ENCODE measurements at regions of chr13 and their contacts with region 1.

Region 1: DNA sequence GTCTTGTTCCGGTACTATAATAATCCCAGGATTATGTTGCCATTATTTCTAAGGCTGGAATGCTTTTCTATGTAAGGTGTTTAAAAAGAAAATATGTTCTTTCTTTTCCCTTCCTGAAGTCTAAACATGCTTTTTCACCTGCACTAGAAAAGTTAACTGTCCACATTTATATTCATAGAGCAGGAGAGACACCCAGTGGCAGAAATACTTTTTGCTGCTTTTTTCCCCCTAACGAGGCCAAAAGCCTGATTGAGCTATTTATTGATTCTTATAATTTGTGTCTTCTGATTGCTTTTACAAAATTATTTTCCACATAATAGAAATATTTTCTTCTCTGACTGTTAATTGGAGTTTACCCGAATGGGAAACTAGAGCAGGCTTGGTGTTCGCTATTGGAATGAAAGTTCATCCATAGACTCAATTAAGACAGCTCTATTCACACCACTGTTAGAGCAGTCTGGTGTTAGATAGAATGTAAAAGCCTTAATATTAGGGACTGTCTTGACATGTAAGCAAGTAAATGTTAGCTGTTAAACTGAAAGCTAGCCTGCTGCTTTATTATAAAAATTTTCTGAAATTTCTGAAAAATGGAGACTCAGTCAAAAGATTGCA is 15.8 kb downstream of the GPR180 start:
- DNase-seq: peak in 2 of 4 donors; percentile 29 to 35
- ATAC-seq: peak; percentile 70
- H3K4me3 ChIP-seq: no peak overlapping the region
- H3K27ac ChIP-seq: no peak overlapping the region
- H3K4me1 ChIP-seq: no peaks in the 10 kb centered on the region
- H3K27me3 ChIP-seq: no peaks in the 10 kb centered on the region
- CTCF ChIP-seq: peak; percentile 48 to 52

Region 2: DNA sequence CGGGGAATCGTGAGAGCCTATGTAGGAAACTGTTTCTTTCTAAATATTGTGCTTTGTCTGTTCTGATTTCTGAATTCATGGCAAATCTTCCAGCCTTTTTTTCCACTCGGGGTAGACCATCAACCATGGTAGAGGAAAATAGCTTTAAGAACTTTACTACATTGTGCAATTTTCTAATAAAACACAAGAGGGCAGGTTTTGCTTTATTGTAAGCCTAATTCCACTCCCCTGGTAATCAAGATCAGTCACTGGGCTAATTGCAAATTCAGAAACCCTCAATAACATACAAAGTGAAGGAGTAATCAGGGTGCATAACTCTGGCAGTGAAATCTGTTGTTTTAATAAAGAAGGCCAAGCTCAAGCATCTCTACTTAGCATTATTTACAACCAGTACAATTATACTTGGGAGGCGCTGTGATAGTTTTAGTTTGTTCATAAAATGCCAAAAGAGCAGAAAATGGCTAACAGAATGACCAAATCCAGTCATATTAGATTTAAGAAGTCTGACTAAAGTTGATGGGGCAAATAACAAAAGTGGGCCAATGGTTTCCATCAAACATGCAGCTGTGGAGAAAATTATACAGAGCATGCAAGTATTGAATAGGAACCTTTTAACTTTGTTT is 181.8 kb before region 1 on chr13:
- intact Hi-C with region 1: loop called in 1 of 2 experiments (anchors 5 kb)
- DNase-seq: peak in 2 of 4 donors; percentile 45 to 58
- ATAC-seq: peak; percentile 84
- H3K4me3 ChIP-seq: no peak overlapping the region
- H3K27ac ChIP-seq: no peak overlapping the region
- H3K4me1 ChIP-seq: no peaks in the 10 kb centered on the region
- H3K27me3 ChIP-seq: no peaks in the 10 kb centered on the region
- CTCF ChIP-seq: peak; percentile 25 to 50

Region 3: DNA sequence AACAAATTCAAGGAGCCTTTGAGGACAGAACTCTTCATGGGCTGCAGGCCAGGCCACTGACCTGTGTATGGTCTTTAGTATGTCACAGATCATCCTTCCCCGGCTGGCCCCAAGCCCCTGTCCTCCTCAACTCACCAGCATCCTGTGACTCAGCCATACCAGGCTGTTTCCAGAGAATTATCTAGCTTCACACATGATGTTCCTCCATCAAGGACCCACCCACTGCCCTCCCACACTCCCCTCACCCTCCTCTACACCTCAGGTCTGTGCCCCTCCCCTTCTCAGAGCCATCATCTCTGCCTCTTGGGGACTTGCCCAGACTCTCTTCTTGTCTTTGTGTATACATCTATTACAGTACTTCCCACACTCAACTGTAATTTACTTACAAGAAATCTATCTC is 152.7 kb before region 1 on chr13:
- intact Hi-C with region 1: no loop called
- DNase-seq: no peak
- ATAC-seq: no peak
- H3K4me3 ChIP-seq: no peak overlapping the region
- H3K27ac ChIP-seq: no peak overlapping the region
- H3K4me1 ChIP-seq: no peaks in the 10 kb centered on the region
- H3K27me3 ChIP-seq: no peaks in the 10 kb centered on the region
- CTCF ChIP-seq: no peak

Region 4: GRCh38 chr13:94520001-94520400 is 97.5 kb before region 1 on chr13:
- intact Hi-C with region 1: no loop called
- DNase-seq: no peak
- ATAC-seq: no peak
- H3K4me3 ChIP-seq: no peak overlapping the region
- H3K27ac ChIP-seq: no peak overlapping the region
- H3K4me1 ChIP-seq: no peaks in the 10 kb centered on the region
- H3K27me3 ChIP-seq: no peaks in the 10 kb centered on the region
- CTCF ChIP-seq: no peak